MCF 10A (cell line): ENCODE measurements at regions of chr2 and their contacts with region 1.

Region 1: GRCh38 chr2:231604685-231605606 is 12.3 kb downstream of the TEX44 start:
- DNase-seq: peak; percentile 96
- H3K4me3 Mint-ChIP-seq: peak overlapping the region; percentile 60
- H3K27ac Mint-ChIP-seq: peak overlapping the region; percentile 92
- H3K4me1 Mint-ChIP-seq: peaks cover 11% of the 10 kb centered on the region
- H3K27me3 Mint-ChIP-seq: no peaks in the 10 kb centered on the region
- CTCF ChIP-seq: no peak

Region 2: GRCh38 chr2:231514103-231514950 is 90.6 kb before region 1 on chr2:
- CTCF ChIA-PET with region 1: interaction called, 14 read pairs
- POLR2A ChIA-PET with region 1: interaction called, 8 read pairs
- intact Hi-C with region 1: loop called (anchors 1 kb)
- DNase-seq: peak; percentile 98
- H3K4me3 Mint-ChIP-seq: peak overlapping the region; percentile 83
- H3K27ac Mint-ChIP-seq: peak overlapping the region; percentile 95
- H3K4me1 Mint-ChIP-seq: peaks cover 7% of the 10 kb centered on the region
- H3K27me3 Mint-ChIP-seq: no peaks in the 10 kb centered on the region
- CTCF ChIP-seq: no peak

Region 3: DNA sequence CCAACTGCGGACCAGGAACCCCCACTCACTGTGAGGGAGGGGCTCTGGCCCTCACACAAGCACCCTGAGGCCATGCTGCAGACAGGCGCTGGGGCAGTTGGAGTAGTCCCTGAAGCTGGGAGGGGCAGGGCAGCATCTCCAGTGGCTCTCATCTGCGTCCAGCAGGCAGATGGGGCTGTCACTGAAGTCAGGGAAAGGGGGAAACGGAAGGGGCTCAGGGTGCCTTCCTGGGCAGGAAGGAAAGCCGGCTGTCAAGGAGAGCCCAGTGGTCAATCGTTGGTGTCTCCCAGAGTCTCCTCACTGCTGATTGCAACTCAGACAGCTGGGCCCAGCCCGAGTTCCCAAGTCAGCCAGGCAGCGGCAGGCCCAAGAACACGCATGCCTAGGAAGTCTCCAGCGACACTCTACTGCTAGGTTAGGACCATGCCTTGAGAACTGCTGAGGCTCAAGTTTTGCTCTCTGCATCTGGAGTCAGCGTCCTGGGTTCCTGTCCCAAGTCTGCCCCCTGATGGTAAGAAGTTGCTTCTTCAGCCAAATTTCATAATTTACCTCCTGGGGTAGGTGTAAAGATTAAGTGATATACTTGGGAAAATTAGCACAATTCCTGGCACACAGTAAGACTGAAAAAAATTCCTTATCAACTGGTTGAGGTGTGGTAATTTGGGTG is 47.2 kb before region 1 on chr2:
- CTCF ChIA-PET with region 1: interaction called, 74 read pairs
- POLR2A ChIA-PET with region 1: interaction called, 9 read pairs
- intact Hi-C with region 1: no loop called
- DNase-seq: peak; percentile 66
- H3K4me3 Mint-ChIP-seq: no peak overlapping the region
- H3K27ac Mint-ChIP-seq: no peak overlapping the region
- H3K4me1 Mint-ChIP-seq: no peaks in the 10 kb centered on the region
- H3K27me3 Mint-ChIP-seq: no peaks in the 10 kb centered on the region
- CTCF ChIP-seq: peak; percentile 57

Region 4: DNA sequence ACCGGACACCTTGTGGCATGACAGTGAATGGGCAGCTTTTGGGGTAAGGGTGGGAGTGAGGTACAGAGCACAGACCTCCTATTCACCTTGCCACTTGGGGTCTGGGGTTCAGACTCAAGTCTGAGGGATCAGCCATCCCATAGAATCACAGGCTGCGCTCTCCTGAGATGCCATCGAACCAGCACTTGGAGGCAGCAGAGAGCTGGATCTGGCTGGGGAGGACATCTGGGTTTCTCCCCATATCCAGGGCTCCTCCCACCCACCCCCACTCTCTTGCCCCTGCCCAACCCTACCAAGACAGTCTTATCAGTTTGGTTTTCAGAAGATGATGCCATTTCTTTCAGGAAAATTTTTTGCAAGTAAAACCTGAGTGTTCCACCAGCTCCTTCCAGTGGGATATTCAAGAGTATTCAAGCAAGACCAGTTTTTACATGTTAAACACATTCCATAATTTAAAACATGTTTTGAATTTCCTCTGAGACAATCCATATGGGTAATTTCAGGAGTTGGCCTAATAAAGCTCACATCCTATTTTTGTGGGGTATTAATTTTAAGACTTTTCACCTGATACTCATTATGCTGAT is 41.5 kb before region 1 on chr2:
- CTCF ChIA-PET with region 1: interaction called, 74 read pairs
- POLR2A ChIA-PET with region 1: interaction called, 9 read pairs
- intact Hi-C with region 1: loop called (anchors 1 kb)
- DNase-seq: peak; percentile 70
- H3K4me3 Mint-ChIP-seq: no peak overlapping the region
- H3K27ac Mint-ChIP-seq: no peak overlapping the region
- H3K4me1 Mint-ChIP-seq: no peaks in the 10 kb centered on the region
- H3K27me3 Mint-ChIP-seq: no peaks in the 10 kb centered on the region
- CTCF ChIP-seq: peak; percentile 78

Region 5: GRCh38 chr2:231590619-231591018 is 14.3 kb before region 1 on chr2:
- CTCF ChIA-PET with region 1: interaction called, 23 read pairs
- POLR2A ChIA-PET with region 1: interaction called, 4 read pairs
- intact Hi-C with region 1: no loop called
- DNase-seq: no peak
- H3K4me3 Mint-ChIP-seq: no peak overlapping the region
- H3K27ac Mint-ChIP-seq: no peak overlapping the region
- H3K4me1 Mint-ChIP-seq: no peaks in the 10 kb centered on the region
- H3K27me3 Mint-ChIP-seq: no peaks in the 10 kb centered on the region
- CTCF ChIP-seq: no peak